K562 (cell line): ENCODE measurements at regions of chr2 and their contacts with region 1.

Region 1: GRCh38 chr2:65081232-65081685 is 25.0 kb downstream of the CEP68 start:
- DNase-seq: peak in 2 of 4 experiments; percentile 64 to 70
- ATAC-seq: peak; percentile 90
- H3K4me3 ChIP-seq: no peak overlapping the region
- H3K27ac ChIP-seq: peak overlapping the region; percentile 39; the same call in 2 of the 3 replicates
- H3K4me1 ChIP-seq: peaks cover 1 to 11% of the 10 kb centered on the region in 2 experiments; a peak in 4 of 5 replicates
- H3K27me3 ChIP-seq: no peaks in the 10 kb centered on the region
- CTCF ChIP-seq: no peak
- EP300 ChIP-seq: peak; percentile 64; the same call in 1 of the 2 replicates
- POLR2A ChIP-seq: no peak
- RAD21 ChIP-seq: 0 out of 4 replicates have a peak, but pooled peaks of 1 of the 2 experiments have one; percentile 1

Region 2: DNA sequence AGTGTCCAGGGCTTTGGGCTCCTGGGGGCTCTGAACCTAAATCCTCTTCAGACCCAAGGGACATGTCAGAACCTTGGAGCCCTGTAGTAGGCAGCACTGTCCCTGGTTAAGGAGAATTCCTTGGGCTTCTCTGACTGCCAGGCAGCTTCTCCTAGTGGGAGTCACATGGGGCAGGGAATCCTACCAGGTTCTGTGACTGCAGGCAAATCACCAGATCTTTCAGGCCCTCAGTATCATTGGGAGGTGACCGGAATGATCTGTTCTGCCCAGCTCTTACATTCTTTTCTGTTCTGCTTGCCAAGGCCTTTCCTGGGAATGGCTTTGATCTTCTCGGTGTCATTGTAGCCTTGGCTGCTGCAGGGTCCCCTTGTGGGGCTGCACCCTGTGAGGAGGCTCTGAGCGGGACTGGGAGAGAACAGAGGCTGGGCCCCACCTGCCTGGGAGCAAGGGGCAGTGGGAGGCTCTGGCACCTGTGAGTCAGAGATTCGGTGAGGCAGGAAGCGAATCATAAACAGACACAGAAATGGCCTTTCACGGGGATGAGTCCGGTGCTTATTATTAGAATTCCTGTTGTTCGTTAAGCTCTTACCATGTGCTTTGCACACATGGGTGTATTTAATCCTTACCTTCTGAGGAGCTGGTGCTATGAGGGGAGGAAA is 11.0 kb before region 1 on chr2:
- CTCF ChIA-PET with region 1: no interaction called
- POLR2A ChIA-PET with region 1: interaction called, 17 read pairs
- in situ Hi-C with region 1: no loop called
- intact Hi-C with region 1: no loop called
- DNase-seq: no peak
- ATAC-seq: peak; percentile 10; the same call in 1 of the 3 replicates
- H3K4me3 ChIP-seq: no peak overlapping the region
- H3K27ac ChIP-seq: no peak overlapping the region
- H3K4me1 ChIP-seq: peaks cover 9 to 11% of the 10 kb centered on the region in 2 experiments; a peak in 4 of 5 replicates
- H3K27me3 ChIP-seq: no peaks in the 10 kb centered on the region
- CTCF ChIP-seq: no peak
- EP300 ChIP-seq: no peak
- POLR2A ChIP-seq: no peak
- RAD21 ChIP-seq: peak in 1 of 2 experiments; percentile 7; a peak in 1 of 4 replicates